OCI-LY7 (cell line): ENCODE measurements at regions of chr3 and their contacts with region 1.

Region 1: GRCh38 chr3:98199020-98199419 is 32.5 kb downstream of the OR5H15 start:
- DNase-seq: no peak
- H3K4me3 ChIP-seq: no peak overlapping the region
- H3K27ac ChIP-seq: no peak overlapping the region
- H3K4me1 ChIP-seq: no peaks in the 10 kb centered on the region
- CTCF ChIP-seq: no peak

Region 2: DNA sequence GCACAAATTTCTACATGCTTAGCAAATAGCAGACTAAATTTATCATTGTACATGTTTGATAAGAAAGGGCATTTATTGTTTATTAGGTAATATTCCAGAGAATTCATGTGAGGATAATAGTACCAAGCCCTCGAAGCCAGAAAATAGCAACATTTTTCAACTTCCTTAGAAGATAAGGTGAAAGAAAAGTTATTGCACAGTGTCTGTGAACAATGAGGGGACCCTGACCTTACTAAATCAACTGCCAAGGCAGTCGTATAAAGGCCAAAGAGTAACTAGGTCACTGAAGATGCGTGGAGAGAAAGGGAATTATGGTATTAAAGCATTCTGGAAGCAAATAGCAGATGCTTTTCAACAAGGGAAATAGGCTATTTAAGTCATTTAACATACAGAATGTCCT is 454.7 kb before region 1 on chr3:
- CTCF ChIA-PET with region 1: no interaction called
- POLR2A ChIA-PET with region 1: no interaction called
- intact Hi-C with region 1: no loop called
- DNase-seq: no peak
- H3K4me3 ChIP-seq: no peak overlapping the region
- H3K27ac ChIP-seq: no peak overlapping the region
- H3K4me1 ChIP-seq: no peaks in the 10 kb centered on the region
- CTCF ChIP-seq: no peak

Region 3: GRCh38 chr3:98166396-98166795 is 32.6 kb before region 1 on chr3 and contains the start of gene OR5H15:
- CTCF ChIA-PET with region 1: no interaction called
- POLR2A ChIA-PET with region 1: interaction called, 3 read pairs
- intact Hi-C with region 1: loop called (anchors 1 kb)
- DNase-seq: no peak
- H3K4me3 ChIP-seq: no peak within 1 kb of the TSS
- H3K27ac ChIP-seq: no peak within 1 kb of the TSS
- H3K4me1 ChIP-seq: no peaks in the 10 kb centered on the region
- CTCF ChIP-seq: no peak
- total RNA-seq, gene OR5H15: not detected in 2 replicates